Dorsolateral prefrontal cortex (tissue), 120 donors: ENCODE measurements at regions of chr2 and their contacts with region 1.

Region 1: DNA sequence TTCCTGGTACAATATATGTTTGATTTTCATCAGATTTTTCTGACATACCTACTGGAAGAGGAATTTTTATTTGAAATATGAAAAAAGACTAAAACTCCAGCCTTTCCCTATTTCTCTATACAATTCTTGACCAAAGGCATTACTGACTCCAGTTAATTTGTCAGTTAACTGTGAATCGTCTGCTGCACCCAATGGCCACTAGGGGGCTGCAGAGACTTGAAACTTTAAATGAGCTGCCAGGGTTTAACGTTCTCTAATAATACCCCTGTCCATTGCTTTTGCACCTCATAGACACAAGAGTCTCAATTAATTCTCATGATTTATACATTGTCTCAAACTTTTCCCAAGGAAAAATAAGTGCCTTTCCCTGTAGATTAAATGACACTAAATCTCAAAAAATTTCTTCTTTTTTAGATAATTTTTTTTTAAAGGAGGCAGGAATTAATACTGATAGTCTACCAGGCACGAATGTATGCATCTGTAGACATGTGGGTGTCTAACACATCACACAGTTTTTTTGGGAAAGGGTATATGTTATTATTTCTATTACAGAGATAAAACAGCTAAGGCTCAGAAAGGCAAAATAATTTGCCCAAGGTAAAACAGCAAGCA is 1.8 kb upstream of the ALK start:
- DNase-seq: peak; percentile 35 to 90 (median 68)
- H3K4me3 ChIP-seq: no peak overlapping the region
- H3K27ac ChIP-seq: no peak overlapping the region
- H3K27me3 ChIP-seq: peaks cover 0 to 23% (median 0%) of the 10 kb centered on the region in 45 donors
- CTCF ChIP-seq: peak; percentile 83 to 98 (median 93)

Region 2: DNA sequence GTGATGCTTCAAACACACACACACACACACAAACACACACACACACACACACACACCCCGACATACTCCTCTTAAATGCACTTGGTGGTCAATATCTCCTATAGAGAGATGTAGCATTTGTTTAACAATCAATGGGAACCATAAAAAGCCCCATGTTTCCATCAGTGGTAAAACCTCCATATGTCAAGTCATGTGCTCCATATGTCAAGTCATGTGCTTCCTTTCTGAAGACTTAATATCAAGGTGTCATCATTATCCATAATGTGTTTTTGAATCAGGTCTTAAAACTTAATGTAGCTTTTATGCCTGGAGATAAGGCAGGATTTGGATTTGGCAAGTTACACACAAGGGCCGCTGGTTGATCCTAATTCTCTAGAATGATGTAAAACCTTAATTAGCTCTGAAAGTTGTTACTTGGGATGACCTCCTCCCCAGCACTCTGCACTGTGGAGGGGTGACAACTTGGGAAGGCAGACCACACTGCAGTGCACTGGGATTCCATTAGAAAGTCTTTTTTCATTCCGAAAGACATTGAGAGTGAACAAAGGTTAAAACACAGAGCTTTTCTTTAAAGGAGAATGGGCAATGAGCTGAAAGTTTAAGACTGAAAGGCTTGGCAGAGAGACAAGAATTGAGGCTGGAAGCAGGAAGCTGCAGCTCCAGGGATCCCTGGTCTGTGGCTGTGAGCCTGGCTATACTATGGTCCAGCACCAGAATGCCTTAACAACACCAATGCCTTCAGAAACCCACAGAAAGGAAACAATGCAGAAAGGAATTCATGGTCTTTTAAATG is 28.2 kb before region 1 on chr2:
- intact Hi-C with region 1: no loop called
- DNase-seq: no peak
- H3K4me3 ChIP-seq: no peak overlapping the region
- H3K27ac ChIP-seq: no peak overlapping the region
- H3K27me3 ChIP-seq: peaks cover 0 to 23% (median 0%) of the 10 kb centered on the region in 45 donors
- CTCF ChIP-seq: no peak

Region 3: DNA sequence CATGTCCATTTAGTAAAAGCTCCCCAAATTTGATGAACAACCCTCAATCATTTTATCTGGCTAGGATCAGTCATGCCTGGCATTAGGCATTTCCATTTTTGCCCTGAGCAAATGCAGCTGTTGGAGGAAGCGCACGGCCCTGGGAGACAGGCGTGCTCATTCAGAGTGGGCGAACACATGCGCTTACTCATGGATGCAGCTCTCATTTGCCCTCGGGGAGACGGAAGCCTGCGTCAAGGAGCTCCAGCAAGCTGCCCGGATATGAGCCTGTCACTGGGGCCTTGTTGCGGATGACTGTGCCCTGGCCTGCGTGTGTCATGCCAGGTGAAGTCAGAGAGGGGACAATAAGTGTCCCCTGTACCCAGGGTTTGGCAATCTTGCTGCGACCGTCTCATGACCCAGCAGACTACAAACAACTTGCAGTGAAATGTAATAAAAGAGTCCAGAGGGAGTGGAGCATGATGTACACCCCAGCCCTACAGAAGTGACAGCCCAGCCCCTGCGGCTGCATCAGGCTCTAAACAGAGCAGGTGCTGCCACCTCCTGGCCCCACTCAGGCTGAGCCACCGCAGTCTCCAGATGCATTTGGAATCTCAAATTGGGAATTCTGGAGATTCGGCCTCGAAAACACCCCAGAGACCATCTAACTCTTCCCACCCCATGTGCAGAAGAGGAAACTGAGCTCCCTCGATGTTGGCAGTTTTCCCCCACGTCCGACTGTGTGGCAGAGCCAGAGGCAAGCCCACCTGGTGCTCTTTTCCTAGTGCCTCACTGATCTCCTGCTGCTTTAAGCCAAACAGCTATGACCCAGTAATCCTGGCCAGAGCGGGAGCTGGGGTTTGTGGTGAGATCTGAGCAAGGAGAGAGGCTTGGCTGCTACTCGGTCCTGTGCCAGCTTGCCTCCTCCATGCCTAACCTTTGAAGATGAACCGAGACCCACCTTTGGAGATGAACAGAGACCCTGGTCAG is 103.2 kb after region 1 on chr2:
- intact Hi-C with region 1: loop called (anchors 2 kb)
- DNase-seq: peak; percentile 34 to 82 (median 70)
- H3K4me3 ChIP-seq: peak overlapping the region in 13 of 59 donors; percentile 9 to 36 (median 24)
- H3K27ac ChIP-seq: peak overlapping the region in 2 of 59 donors; percentile 4 to 22
- H3K27me3 ChIP-seq: peaks cover 0 to 6% (median 0%) of the 10 kb centered on the region in 45 donors
- CTCF ChIP-seq: peak in 55 of 56 donors; percentile 39 to 87 (median 75)

Region 4: DNA sequence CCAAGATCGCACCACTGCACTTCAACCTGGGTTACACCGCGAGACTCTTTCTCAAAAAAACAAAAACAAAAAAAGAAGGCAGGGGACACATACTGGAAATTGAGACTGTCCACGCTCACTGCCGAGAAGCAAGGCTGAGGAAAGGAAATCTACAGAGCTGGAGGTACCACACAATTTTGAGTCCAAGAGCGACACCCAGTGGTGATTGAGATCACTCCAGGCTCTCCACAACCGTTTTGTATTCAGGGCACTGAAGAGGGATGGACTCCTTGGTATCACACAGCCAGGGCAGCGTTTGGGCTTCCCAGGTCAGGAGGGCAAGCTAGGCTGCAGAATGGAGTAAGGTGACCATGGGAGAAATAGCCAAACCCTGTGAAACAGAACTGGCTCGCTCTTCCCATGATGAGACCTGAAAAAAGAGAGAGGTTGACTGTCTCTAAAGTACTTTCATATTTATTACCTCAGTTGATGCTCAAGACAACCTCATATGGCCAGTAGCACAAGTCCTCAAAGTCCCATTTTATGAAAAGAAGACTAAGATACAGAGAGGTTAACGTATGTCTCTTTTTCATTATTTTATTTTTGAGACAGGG is 149.1 kb after region 1 on chr2:
- intact Hi-C with region 1: loop called (anchors 5 kb)
- DNase-seq: peak; percentile 28 to 86 (median 70)
- H3K4me3 ChIP-seq: no peak overlapping the region
- H3K27ac ChIP-seq: no peak overlapping the region
- H3K27me3 ChIP-seq: peaks cover 0 to 4% (median 0%) of the 10 kb centered on the region in 45 donors
- CTCF ChIP-seq: peak; percentile 53 to 85 (median 77)